Activated CD8-positive, alpha-beta T cell treated with anti-CD3 and anti-CD28 coated beads, Interleukin-2, amount 10 ng/mL, durations not matched to agents 7 days and 5 days (primary cell): ENCODE measurements at regions of chr14 and their contacts with region 1.

Region 1: DNA sequence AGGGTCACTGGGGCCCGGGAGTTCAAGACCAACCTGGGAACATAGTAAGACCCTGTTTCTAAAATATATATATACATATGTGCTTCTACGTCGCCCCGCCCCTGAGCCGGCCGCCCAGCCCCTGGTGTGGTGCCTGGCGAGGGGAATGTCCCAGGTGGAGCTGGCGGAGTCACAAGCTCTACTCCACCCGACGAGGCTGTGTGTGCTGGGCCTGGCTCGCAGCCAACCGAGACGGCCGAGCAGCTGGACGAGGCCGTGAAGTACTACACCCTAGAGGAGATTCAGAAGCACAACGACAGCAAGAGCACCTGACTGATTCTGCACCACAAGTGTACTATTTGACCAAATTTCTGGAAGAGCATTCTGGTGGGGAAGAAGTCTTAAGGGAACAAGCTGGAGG is 22.1 kb upstream of the ITPK1 start:
- DNase-seq: no peak
- ATAC-seq: no peak
- H3K4me3 Mint-ChIP-seq: no peak overlapping the region
- H3K27ac Mint-ChIP-seq: no peak overlapping the region
- H3K4me1 Mint-ChIP-seq: peaks cover 4% of the 10 kb centered on the region
- H3K27me3 Mint-ChIP-seq: no peaks in the 10 kb centered on the region

Region 2: DNA sequence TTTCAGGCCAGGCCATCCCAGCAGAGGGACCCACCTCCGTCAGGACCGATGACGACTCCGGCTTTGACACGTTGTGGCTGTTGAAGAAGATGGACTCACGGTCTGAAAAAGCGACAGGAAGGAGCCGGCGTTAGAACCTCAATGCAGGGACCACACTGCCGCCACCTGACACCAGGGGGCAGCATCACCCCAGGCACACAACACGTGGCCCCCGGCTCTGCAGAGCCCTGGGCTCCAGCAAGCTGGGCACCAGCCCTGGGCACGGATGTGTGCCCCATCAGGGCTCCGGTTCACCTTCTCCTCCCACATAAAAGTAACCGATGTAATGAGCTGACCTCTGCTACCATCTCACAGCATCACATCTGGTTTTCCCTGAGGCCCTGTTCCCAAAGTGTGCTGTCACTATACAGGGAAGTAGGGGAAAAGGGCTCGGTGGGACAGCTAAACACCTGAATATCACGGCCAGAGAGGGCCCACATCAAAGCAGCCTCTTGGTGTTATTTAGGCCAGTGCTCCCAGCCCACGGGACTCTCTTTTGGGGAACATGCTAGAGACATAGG is 185.9 kb before region 1 on chr14:
- CTCF ChIA-PET with region 1: interaction called, 27 read pairs
- POLR2A ChIA-PET with region 1: no interaction called
- DNase-seq: peak; percentile 88
- ATAC-seq: peak; percentile 95
- H3K4me3 Mint-ChIP-seq: no peak overlapping the region
- H3K27ac Mint-ChIP-seq: no peak overlapping the region
- H3K4me1 Mint-ChIP-seq: peaks cover 7% of the 10 kb centered on the region
- H3K27me3 Mint-ChIP-seq: no peaks in the 10 kb centered on the region